ENCODE measurements at regions of chr22 and their contacts with region 1.

Region 1: DNA sequence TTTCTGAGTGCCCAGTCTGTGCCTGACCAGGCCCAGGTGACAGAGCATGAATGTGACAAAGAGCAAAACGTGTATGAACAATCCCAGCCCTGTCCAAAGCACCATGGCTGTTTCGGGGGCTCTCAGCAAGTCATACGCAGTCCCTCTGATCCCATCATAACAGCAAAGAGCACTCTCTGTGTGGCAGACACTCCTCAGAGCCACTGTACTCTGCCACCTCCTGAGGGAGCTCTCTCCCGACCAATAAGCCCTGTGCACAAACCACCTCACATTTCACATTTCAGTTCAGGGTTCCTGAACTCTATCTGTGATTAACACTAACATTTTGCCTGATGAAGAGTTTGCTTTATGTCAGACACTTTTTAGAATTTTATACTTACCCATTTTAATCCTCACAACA is 6.6 kb downstream of the DGCR2 start:
- DNase-seq: no peak
- H3K4me3 ChIP-seq: no peak overlapping the region
- H3K27ac ChIP-seq: no peak overlapping the region
- H3K4me1 ChIP-seq: peaks cover 0 to 23% (median 15%) of the 10 kb centered on the region in 3 donors
- H3K27me3 ChIP-seq: no peaks in the 10 kb centered on the region
- CTCF ChIP-seq: no peak

Region 2: GRCh38 chr22:19168211-19168890 is 52.7 kb after region 1 on chr22:
- intact Hi-C with region 1: loop called (anchors 5 kb)
- DNase-seq: no peak
- H3K4me3 ChIP-seq: no peak overlapping the region
- H3K27ac ChIP-seq: no peak overlapping the region
- H3K4me1 ChIP-seq: peaks cover 0 to 24% (median 11%) of the 10 kb centered on the region in 3 donors
- H3K27me3 ChIP-seq: peaks cover 16% of the 10 kb centered on the region
- CTCF ChIP-seq: no peak

Measured in kidney (tissue), 22 donors.